ENCODE measurements at regions of chr16 and their contacts with region 1.

Region 1: GRCh38 chr16:23182460-23183309 is at the start of gene SCNN1G:
- DNase-seq: peak; percentile 78 to 83
- ATAC-seq: peak; percentile 99
- H3K4me3 ChIP-seq: peak within 1 kb of the TSS; percentile 44
- H3K27ac ChIP-seq: peak within 1 kb of the TSS; percentile 51 to 53; a peak in 3 of 6 replicates
- H3K4me1 ChIP-seq: peaks cover 8% of the 10 kb centered on the region; the same call in 2 of the 3 replicates
- CTCF ChIP-seq: peak; percentile 97
- EP300 ChIP-seq: no peak
- POLR2A ChIP-seq: no peak
- RAD21 ChIP-seq: peak; percentile 83 to 96
- polyA plus RNA-seq, gene SCNN1G: 0.05 and 0.20 TPM in 2 replicates

Region 2: DNA sequence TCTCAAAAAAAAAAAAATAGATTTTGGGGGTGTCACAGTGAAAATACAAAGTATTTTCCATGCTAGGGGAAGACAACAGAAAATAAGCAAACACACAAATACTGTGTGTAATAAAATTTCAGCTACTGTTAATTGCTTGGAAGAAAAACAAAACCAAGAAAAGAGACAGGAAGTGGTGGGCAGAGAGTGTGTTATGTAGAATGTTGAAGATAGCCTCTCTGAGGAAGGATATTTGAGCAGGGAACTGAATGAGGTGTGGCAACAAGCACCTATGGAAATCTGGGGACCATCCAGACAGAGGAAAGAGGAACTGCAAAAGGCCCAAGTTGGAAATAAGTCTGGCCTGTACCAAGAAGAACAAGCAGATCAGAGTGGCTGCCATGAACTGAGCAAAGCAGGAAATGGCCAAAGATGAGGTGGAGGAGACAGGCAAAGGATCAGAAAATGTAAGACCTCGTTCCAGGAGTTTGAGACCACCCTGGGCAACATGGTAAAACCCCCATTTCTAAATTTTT is 25.7 kb before region 1 on chr16:
- CTCF ChIA-PET with region 1: interaction called, 10 read pairs
- POLR2A ChIA-PET with region 1: no interaction called
- DNase-seq: no peak
- ATAC-seq: no peak
- H3K4me3 ChIP-seq: no peak overlapping the region
- H3K27ac ChIP-seq: no peak overlapping the region
- H3K4me1 ChIP-seq: no peaks in the 10 kb centered on the region
- CTCF ChIP-seq: no peak
- EP300 ChIP-seq: no peak
- POLR2A ChIP-seq: no peak
- RAD21 ChIP-seq: no peak

Region 3: DNA sequence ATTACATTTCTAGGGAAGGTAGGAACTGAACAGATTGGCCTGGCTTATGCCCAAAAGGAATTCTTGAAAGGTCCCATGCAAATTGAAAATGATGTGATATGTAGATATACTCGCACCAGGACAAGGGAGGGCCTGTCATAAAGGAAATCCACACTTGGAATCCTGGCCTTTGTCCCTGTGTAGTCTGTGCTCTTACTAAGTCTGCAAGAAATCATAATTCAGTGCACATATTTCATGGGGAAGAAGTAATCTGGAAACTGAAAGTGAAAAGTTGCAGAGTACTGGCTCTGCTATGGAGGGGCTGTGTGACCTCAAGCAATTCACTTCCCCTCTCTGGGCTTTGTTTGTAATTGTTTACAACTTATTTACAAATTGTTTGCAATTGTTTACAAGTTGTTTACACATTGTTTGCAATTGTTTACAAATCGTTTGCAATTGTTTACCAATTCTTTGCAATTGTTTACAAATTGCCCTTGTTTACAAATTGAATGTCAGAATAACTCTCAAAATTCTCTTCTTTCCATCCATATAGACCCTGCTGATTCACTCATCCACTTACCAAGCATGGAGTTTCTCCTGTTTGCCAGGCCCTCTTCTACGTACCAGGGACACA is 12.8 kb after region 1 on chr16:
- CTCF ChIA-PET with region 1: interaction called, 20 read pairs
- POLR2A ChIA-PET with region 1: no interaction called
- DNase-seq: no peak
- ATAC-seq: no peak
- H3K4me3 ChIP-seq: no peak overlapping the region
- H3K27ac ChIP-seq: no peak overlapping the region
- H3K4me1 ChIP-seq: no peaks in the 10 kb centered on the region
- CTCF ChIP-seq: no peak
- EP300 ChIP-seq: no peak
- POLR2A ChIP-seq: no peak
- RAD21 ChIP-seq: no peak

Region 4: DNA sequence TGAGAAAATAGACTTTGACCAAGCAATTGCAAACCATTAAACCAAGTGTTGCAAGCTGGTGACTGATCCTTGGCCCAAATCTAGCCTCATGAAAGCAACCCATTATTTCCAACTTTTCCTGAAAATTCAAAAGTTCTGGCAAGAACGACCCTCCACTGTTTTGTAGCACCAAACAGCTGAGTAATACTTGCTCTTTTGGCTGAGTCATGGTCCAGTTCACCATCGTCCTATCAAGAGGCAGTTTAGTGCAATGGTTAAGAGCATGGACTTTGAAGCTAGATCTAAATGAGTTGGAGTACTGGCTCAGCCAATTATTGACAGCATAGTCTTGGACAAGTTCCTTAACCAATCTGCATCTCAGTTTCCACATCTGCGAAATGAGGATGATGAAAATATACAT is 31.1 kb after region 1 on chr16:
- CTCF ChIA-PET with region 1: interaction called, 13 read pairs
- POLR2A ChIA-PET with region 1: no interaction called
- DNase-seq: no peak
- ATAC-seq: no peak
- H3K4me3 ChIP-seq: no peak overlapping the region
- H3K27ac ChIP-seq: no peak overlapping the region
- H3K4me1 ChIP-seq: no peaks in the 10 kb centered on the region
- CTCF ChIP-seq: no peak
- EP300 ChIP-seq: no peak
- POLR2A ChIP-seq: no peak
- RAD21 ChIP-seq: no peak

Region 5: DNA sequence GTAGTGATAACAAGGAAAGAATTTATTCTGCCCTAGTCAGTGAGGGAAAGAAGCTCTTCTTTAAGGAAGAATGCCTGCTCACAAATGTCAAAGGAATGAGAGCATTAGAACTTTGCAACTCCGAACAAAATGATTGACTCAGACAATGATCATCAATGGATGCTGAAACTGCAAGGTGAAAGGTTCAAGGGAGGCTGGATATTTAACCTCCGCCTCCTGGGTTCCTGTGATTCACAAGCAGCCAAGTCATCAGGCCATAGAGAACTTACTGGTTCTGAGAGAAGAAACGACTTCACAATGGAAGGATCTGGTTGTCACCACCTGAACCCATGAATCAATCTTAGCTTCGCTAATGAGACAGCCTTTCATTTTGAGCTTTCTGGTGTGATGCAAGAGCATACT is 103.4 kb after region 1 on chr16:
- CTCF ChIA-PET with region 1: no interaction called
- POLR2A ChIA-PET with region 1: no interaction called
- DNase-seq: no peak
- ATAC-seq: no peak
- H3K4me3 ChIP-seq: no peak overlapping the region
- H3K27ac ChIP-seq: no peak overlapping the region
- H3K4me1 ChIP-seq: no peaks in the 10 kb centered on the region
- CTCF ChIP-seq: no peak
- EP300 ChIP-seq: no peak
- POLR2A ChIP-seq: no peak
- RAD21 ChIP-seq: no peak

Region 6: GRCh38 chr16:23423496-23424049 is 240.9 kb after region 1 on chr16:
- CTCF ChIA-PET with region 1: interaction called, 10 read pairs
- POLR2A ChIA-PET with region 1: no interaction called
- DNase-seq: peak; percentile 60 to 93
- ATAC-seq: peak; percentile 86 to 87
- H3K4me3 ChIP-seq: 0 out of 3 replicates have a peak overlapping the region, but pooled peaks have one; percentile 14
- H3K27ac ChIP-seq: peak overlapping the region; percentile 84 to 93
- H3K4me1 ChIP-seq: peaks cover 29% of the 10 kb centered on the region
- CTCF ChIP-seq: no peak
- EP300 ChIP-seq: no peak
- POLR2A ChIP-seq: no peak
- RAD21 ChIP-seq: 0 out of 5 replicates have a peak, but pooled peaks of 1 of the 2 experiments have one; percentile 11